PC-3 (cell line): ENCODE measurements at regions of chr2 and their contacts with region 1.

Region 1: DNA sequence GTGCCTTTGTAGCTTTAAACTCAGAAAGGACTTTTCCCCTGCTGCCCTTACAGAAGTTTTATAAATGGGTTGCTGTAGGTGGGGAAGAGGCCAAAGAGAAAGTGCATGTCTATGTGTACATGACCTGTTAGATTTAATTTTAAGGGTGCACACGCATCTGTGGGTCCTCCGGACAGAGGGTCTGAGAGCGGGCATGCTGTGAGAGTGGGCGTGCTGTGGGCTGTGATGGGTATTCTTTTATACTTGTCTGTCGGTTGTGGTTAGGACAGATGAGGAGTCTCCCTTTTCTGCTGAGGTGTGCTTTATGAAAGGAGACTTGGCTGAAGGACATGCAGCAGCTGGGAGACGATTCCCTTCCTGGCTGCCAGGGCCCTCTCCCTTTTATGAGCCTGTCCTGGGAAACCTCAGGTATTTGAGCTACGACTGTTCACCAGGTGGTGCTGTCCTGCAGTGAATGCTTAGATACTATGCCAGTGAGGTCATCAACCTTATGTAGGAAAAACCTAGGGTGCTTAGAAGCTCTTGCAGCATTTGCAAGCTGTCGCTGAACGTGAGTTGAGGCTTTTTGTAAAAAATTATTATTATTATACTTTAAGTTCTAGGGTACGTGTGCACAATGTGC is 67.5 kb downstream of the TANC1 start:
- DNase-seq: peak; percentile 93
- ATAC-seq: peak; percentile 98
- H3K4me3 ChIP-seq: no peak overlapping the region
- H3K27ac ChIP-seq: no peak overlapping the region
- H3K4me1 ChIP-seq: peaks cover 9% of the 10 kb centered on the region
- H3K27me3 ChIP-seq: no peaks in the 10 kb centered on the region
- CTCF ChIP-seq: peak; percentile 81

Region 2: DNA sequence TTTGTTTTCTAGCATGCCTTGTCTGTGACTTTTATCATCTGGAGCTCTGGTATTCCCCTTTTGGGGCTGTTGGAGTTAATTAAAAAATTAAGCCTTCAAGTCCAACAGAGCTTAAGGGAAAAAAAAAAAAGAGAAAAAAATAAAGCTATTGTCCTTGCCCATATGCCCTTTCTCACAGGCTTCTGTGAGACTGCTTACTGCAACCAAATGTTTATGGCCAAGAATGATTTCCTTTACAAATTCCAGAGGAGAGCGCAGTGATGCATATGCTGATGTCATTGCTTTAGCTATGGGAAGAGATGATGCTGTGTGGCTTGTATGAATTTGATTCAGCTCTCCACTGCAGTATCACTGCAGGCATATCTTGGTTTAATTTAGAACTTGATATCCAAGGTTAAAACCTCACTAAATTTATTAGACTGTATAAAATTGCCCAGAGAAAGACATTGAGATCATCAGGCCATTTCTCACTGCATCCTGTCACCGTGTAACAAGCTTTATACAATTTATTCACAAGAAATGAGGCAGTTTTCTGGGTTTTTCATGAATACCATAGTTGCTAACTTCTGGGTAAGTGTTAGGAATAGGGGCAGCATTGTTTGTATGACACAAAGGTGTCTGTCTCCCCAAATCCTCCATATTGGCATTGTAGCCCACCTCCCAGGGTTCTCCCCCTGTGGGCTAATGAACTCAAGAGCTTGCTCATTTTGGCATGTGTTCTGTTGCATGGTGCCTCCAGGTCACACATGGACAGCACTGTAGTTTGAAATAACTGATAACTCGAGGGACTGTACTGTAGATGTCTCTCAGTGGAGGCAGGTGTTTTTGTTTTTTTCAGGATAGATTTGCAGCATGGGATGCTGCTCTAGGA is 17.5 kb after region 1 on chr2:
- CTCF ChIA-PET with region 1: no interaction called
- POLR2A ChIA-PET with region 1: no interaction called
- intact Hi-C with region 1: no loop called
- DNase-seq: no peak
- ATAC-seq: no peak
- H3K4me3 ChIP-seq: no peak overlapping the region
- H3K27ac ChIP-seq: no peak overlapping the region
- H3K4me1 ChIP-seq: no peaks in the 10 kb centered on the region
- H3K27me3 ChIP-seq: no peaks in the 10 kb centered on the region
- CTCF ChIP-seq: no peak

Region 3: DNA sequence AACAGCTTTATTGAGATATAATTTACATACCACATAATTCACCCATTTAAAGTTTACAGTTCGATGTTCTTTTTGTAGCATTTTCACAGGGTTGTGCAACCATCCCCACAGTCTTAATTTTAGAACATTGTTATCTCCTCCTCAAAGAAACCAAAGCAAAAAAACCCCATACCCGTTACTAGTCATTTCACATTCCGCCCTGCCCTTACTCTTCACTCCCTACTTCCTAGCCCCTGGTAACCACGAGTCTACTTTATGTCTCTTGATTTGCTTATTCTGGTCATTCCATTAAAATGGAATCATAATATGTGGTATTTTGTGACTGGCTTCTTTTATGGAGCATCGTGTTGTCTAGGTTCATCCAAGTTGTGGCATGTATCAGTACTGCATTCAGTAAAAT is 70.2 kb after region 1 on chr2:
- CTCF ChIA-PET with region 1: no interaction called
- POLR2A ChIA-PET with region 1: no interaction called
- intact Hi-C with region 1: no loop called
- DNase-seq: no peak
- ATAC-seq: no peak
- H3K4me3 ChIP-seq: no peak overlapping the region
- H3K27ac ChIP-seq: no peak overlapping the region
- H3K4me1 ChIP-seq: no peaks in the 10 kb centered on the region
- H3K27me3 ChIP-seq: no peaks in the 10 kb centered on the region
- CTCF ChIP-seq: no peak

Region 4: GRCh38 chr2:159118115-159118858 is 82.4 kb after region 1 on chr2:
- CTCF ChIA-PET with region 1: interaction called, 33 read pairs
- POLR2A ChIA-PET with region 1: no interaction called
- intact Hi-C with region 1: loop called (anchors 1 kb)
- DNase-seq: peak; percentile 89
- ATAC-seq: peak; percentile 91
- H3K4me3 ChIP-seq: no peak overlapping the region
- H3K27ac ChIP-seq: peak overlapping the region; percentile 18; the same call in 1 of the 2 replicates
- H3K4me1 ChIP-seq: peaks cover 10% of the 10 kb centered on the region
- H3K27me3 ChIP-seq: no peaks in the 10 kb centered on the region
- CTCF ChIP-seq: peak; percentile 96